IMR-90 (cell line): ENCODE measurements at regions of chr11 and their contacts with region 1.

Region 1: GRCh38 chr11:119709638-119710346 is 19.2 kb downstream of the NECTIN1 start:
- DNase-seq: peak; percentile 69
- ATAC-seq: peak; percentile 86
- H3K4me3 ChIP-seq: no peak overlapping the region
- H3K27ac ChIP-seq: no peak overlapping the region
- H3K4me1 ChIP-seq: no peaks in the 10 kb centered on the region
- H3K27me3 ChIP-seq: peaks cover 2% of the 10 kb centered on the region; the same call in 1 of the 2 replicates
- CTCF ChIP-seq: no peak
- POLR2A ChIP-seq: no peak
- RAD21 ChIP-seq: no peak

Region 2: GRCh38 chr11:120055646-120056045 is 345.9 kb after region 1 on chr11:
- CTCF ChIA-PET with region 1: no interaction called
- POLR2A ChIA-PET with region 1: no interaction called
- dilution Hi-C with region 1: no loop called
- in situ Hi-C with region 1: no loop called
- intact Hi-C with region 1: no loop called
- DNase-seq: no peak
- ATAC-seq: no peak
- H3K4me3 ChIP-seq: no peak overlapping the region
- H3K27ac ChIP-seq: no peak overlapping the region
- H3K4me1 ChIP-seq: no peaks in the 10 kb centered on the region
- H3K27me3 ChIP-seq: peaks cover 14% of the 10 kb centered on the region
- CTCF ChIP-seq: no peak
- POLR2A ChIP-seq: no peak
- RAD21 ChIP-seq: no peak

Region 3: DNA sequence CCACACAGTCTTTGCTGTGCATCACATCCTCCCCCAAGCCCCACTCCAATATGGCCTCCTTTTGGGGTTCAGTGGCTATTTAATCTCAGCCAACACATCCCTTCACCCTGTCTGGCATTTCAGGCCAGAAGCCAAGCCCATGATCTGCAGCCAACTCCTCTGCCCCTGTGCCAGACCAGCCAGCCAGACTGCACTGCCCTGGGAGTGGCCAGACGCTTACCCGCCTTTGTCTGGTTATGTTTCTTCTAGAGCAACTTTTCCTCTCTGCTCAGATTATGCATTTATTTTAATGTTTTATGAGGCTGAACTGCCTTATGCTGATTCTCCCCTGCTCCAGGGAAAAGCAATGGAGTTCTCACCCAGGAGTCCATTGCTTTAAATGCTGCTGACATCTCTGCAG is 1107.4 kb after region 1 on chr11:
- CTCF ChIA-PET with region 1: no interaction called
- POLR2A ChIA-PET with region 1: no interaction called
- dilution Hi-C with region 1: no loop called
- in situ Hi-C with region 1: no loop called
- intact Hi-C with region 1: loop called (anchors 10 kb)
- DNase-seq: no peak
- ATAC-seq: no peak
- H3K4me3 ChIP-seq: no peak overlapping the region
- H3K27ac ChIP-seq: no peak overlapping the region
- H3K4me1 ChIP-seq: no peaks in the 10 kb centered on the region
- H3K27me3 ChIP-seq: peaks cover 34% of the 10 kb centered on the region
- CTCF ChIP-seq: no peak
- POLR2A ChIP-seq: no peak
- RAD21 ChIP-seq: no peak